BJ (cell line): ENCODE measurements at regions of chr19 and their contacts with region 1.

Region 1: GRCh38 chr19:42440357-42441048 is 2.2 kb downstream of the CXCL17 start:
- DNase-seq: no peak
- H3K4me3 ChIP-seq: no peak overlapping the region
- H3K27me3 ChIP-seq: peaks cover 6% of the 10 kb centered on the region
- CTCF ChIP-seq: peak; percentile 97

Region 2: DNA sequence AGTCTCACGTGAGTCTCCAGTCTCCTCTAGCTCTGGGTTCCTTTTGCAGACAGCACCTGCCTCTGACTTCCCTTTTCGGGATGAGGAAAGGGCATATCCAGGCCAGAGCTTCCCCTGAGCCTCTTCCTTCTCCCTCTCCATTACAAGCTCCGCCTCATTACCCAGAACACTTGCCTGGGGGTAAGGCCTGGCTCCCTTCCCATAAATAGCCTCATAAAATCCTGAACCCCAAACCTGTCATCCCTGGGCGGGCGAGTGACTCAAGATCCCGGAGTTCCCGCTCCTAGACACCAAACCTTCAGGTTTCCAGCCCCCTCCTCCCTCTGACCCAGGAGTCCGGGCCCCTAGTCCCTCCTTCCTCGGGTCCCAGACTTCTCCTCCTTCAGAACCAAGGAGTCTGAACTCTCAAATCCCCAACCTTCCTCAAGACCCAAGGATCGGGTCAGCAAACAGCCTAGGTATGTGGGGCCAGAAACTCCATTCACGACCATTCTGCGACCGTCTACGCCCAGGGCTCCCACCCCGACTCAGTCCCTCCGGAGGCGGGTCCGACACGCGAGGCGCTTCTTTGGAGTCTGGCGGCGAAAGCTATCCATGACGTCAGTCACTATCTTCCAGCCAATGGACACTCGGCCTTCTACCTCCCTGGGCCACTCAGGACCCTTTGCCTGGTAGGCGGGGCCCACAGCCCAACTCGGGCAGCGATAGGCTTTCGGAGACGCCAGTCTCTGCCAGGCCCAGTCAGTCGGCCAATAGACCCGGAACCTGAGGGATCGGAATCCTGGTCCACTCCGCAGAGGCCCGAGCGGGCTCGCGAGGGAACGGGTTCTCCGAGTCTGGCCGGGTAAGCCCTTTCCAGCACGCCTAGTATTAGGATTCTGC is 43.9 kb before region 1 on chr19:
- CTCF ChIA-PET with region 1: interaction called, 10 read pairs
- POLR2A ChIA-PET with region 1: no interaction called
- DNase-seq: peak; percentile 98
- H3K4me3 ChIP-seq: peak overlapping the region; percentile 58
- H3K27me3 ChIP-seq: no peaks in the 10 kb centered on the region; the same call in 1 of the 2 replicates
- CTCF ChIP-seq: no peak

Region 3: DNA sequence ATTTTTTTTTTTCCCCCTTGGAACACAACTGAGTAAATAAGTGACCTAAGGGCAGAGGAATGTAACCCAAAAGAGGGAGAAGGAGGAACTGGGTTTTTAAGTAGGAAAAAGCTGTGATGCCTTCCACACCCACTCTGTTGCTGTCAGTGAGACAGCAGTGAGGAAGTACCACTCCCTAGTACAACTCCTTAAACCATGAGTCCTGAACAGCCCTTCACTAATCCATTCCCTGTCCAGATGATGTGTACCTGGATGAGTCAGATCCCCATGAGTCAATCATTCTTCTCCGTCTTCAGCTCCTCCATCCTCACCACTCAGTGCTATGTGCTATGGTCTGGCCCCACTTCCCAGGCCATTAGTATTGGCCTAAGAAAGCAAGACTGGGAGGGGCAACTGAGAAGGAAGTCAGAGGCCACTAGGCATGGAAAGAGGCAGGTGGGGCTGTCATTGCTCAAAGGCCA is 15.1 kb after region 1 on chr19:
- CTCF ChIA-PET with region 1: interaction called, 43 read pairs
- POLR2A ChIA-PET with region 1: no interaction called
- DNase-seq: no peak
- H3K4me3 ChIP-seq: no peak overlapping the region
- H3K27me3 ChIP-seq: peaks cover 6% of the 10 kb centered on the region
- CTCF ChIP-seq: no peak

Region 4: DNA sequence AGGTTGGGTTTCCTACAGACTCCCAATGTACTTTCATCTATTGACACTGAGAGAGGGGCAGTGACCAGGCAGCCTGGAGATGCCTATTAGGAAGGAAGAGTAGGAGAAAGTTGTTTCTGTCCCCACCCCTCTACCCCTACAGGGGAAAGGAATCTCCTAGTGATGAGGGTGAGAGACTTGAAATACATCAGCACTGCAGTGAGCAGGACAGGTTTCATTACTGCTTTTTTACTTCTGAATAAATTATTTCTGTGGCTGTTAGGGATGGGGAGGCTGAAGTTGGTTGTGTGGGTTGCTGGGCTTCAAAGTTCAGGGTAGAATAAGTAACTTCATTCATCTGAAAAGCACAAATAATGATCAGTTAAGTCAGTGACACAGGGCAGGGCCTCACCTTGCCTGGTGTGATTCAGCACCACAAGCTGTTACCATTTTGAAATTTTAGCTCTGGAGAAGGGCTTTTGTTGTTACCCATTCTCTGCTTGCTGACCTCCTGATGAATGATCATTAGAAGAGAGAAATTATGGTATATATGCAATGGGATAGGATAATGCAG is 68.5 kb after region 1 on chr19:
- CTCF ChIA-PET with region 1: interaction called, 16 read pairs
- POLR2A ChIA-PET with region 1: no interaction called
- DNase-seq: no peak
- H3K4me3 ChIP-seq: no peak overlapping the region
- H3K27me3 ChIP-seq: peaks cover 11% of the 10 kb centered on the region
- CTCF ChIP-seq: no peak

Region 5: DNA sequence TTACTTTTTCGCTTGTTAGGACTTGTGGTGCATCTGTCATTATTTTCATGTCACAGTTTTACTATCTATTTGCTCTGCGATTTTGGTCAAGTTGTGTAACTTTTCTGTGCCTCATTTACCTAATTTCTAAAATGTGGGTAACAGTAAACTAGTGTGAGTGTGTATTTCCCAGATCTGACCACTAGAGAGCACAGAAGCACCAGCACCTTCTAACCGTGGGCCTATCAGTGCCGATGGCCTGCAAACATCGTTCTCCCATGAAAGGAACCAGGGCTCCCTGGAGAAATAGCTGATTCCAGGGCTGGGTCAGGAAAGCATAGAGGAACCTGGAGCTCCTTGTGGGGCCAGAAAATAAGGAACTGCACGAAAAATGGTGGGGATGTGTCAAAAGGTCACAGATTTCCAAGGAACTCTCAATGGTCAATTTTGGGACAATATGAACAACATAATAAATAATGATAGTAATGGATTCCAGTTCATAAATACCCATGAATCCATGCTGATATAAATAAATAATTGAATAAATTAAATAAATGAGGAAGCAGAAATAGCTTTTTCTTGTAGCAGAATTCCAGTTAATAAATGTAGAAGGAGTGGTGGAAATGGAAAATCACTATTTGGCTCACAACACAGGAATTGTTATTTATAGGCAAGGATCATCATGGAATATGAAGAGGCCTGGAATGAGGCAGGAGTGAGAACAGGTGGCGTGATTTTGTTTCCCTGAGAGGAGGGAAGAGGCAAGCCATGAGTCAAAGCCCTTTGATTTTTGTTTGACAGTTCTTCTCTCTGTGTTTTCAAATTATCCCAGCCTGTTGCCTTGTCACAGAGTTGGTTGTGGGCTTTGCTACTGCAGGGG is 123.1 kb after region 1 on chr19:
- CTCF ChIA-PET with region 1: interaction called, 10 read pairs
- POLR2A ChIA-PET with region 1: no interaction called
- DNase-seq: no peak
- H3K4me3 ChIP-seq: no peak overlapping the region
- H3K27me3 ChIP-seq: peaks cover 20% of the 10 kb centered on the region
- CTCF ChIP-seq: peak; percentile 80